CD8-positive, alpha-beta T cell (primary cell): ENCODE measurements at regions of chr15 and their contacts with region 1.

Region 1: GRCh38 chr15:52227456-52227855 is 36.3 kb upstream of the GNB5 start:
- DNase-seq: peak; percentile 37 to 88 (median 67)
- ATAC-seq: peak; percentile 100
- H3K4me3 ChIP-seq: no peak overlapping the region
- H3K4me3 Mint-ChIP-seq: no peak overlapping the region
- H3K27ac ChIP-seq: no peak overlapping the region
- H3K27ac Mint-ChIP-seq: no peak overlapping the region
- H3K4me1 ChIP-seq: peaks cover 4% of the 10 kb centered on the region
- H3K4me1 Mint-ChIP-seq: peaks cover 20% of the 10 kb centered on the region
- H3K27me3 ChIP-seq: no peaks in the 10 kb centered on the region
- H3K27me3 Mint-ChIP-seq: no peaks in the 10 kb centered on the region
- CTCF ChIP-seq: peak; percentile 72

Region 2: DNA sequence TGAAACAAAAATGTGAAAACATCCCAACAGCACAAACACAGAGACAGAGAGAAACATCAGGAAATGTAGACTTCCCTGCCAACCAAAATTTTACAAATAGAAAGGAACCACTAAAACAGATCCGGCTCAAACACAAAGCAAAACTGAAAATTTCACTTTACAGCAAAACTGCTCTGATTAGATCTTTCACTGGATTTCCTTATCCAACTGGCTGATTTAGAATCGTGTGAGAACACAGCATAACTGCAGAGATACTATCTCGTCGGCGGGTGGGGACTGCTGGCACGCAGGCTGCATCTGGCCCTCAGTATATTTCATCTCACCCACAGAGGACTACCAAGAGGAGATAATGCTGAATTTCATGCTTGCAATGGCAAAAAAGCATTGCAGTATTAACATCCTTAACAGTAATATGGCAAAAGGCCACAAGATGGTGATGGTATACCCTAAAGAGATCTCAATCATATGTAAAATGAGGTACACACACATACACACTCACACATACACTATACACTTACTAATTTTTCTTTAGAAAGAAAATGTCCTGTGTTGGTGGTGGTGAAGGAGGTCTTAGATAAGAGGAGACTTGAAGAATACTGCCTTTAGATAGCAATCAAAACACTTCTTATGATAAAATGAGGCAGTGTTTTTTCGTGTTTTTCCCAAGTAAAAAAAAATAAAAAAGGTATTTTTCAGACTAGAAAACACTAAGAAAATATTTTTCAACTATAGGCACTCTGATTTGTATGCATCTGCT is 245.3 kb before region 1 on chr15:
- CTCF ChIA-PET with region 1: interaction called, 5 read pairs
- POLR2A ChIA-PET with region 1: no interaction called
- intact Hi-C with region 1: loop called (anchors 1 kb)
- DNase-seq: peak in 7 of 9 experiments; percentile 5 to 81 (median 32)
- ATAC-seq: peak; percentile 96
- H3K4me3 ChIP-seq: no peak overlapping the region
- H3K4me3 Mint-ChIP-seq: peak overlapping the region; percentile 68
- H3K27ac ChIP-seq: no peak overlapping the region
- H3K27ac Mint-ChIP-seq: peak overlapping the region; percentile 25
- H3K4me1 ChIP-seq: peaks cover 8% of the 10 kb centered on the region
- H3K4me1 Mint-ChIP-seq: peaks cover 10% of the 10 kb centered on the region
- H3K27me3 ChIP-seq: peaks cover 0 to 2% of the 10 kb centered on the region in 2 experiments
- H3K27me3 Mint-ChIP-seq: no peaks in the 10 kb centered on the region
- CTCF ChIP-seq: peak; percentile 88

Region 3: GRCh38 chr15:52163321-52164190 is 63.9 kb before region 1 on chr15:
- CTCF ChIA-PET with region 1: interaction called, 35 read pairs
- POLR2A ChIA-PET with region 1: no interaction called
- intact Hi-C with region 1: loop called (anchors 1 to 2 kb)
- DNase-seq: peak in 5 of 9 experiments; percentile 31 to 55 (median 40)
- ATAC-seq: peak; percentile 46
- H3K4me3 ChIP-seq: no peak overlapping the region
- H3K4me3 Mint-ChIP-seq: no peak overlapping the region
- H3K27ac ChIP-seq: no peak overlapping the region
- H3K27ac Mint-ChIP-seq: no peak overlapping the region
- H3K4me1 ChIP-seq: peaks cover 4% of the 10 kb centered on the region
- H3K4me1 Mint-ChIP-seq: peaks cover 35% of the 10 kb centered on the region
- H3K27me3 ChIP-seq: no peaks in the 10 kb centered on the region
- H3K27me3 Mint-ChIP-seq: no peaks in the 10 kb centered on the region
- CTCF ChIP-seq: peak; percentile 31

Region 4: GRCh38 chr15:52217186-52217585 is 10.3 kb before region 1 on chr15:
- CTCF ChIA-PET with region 1: interaction called, 36 read pairs
- POLR2A ChIA-PET with region 1: no interaction called
- intact Hi-C with region 1: no loop called
- DNase-seq: peak in 2 of 9 experiments; percentile 19 to 29
- ATAC-seq: peak; percentile 34
- H3K4me3 ChIP-seq: no peak overlapping the region
- H3K4me3 Mint-ChIP-seq: no peak overlapping the region
- H3K27ac ChIP-seq: no peak overlapping the region
- H3K27ac Mint-ChIP-seq: no peak overlapping the region
- H3K4me1 ChIP-seq: peaks cover 17% of the 10 kb centered on the region
- H3K4me1 Mint-ChIP-seq: peaks cover 17% of the 10 kb centered on the region
- H3K27me3 ChIP-seq: no peaks in the 10 kb centered on the region
- H3K27me3 Mint-ChIP-seq: no peaks in the 10 kb centered on the region
- CTCF ChIP-seq: no peak

Region 5: DNA sequence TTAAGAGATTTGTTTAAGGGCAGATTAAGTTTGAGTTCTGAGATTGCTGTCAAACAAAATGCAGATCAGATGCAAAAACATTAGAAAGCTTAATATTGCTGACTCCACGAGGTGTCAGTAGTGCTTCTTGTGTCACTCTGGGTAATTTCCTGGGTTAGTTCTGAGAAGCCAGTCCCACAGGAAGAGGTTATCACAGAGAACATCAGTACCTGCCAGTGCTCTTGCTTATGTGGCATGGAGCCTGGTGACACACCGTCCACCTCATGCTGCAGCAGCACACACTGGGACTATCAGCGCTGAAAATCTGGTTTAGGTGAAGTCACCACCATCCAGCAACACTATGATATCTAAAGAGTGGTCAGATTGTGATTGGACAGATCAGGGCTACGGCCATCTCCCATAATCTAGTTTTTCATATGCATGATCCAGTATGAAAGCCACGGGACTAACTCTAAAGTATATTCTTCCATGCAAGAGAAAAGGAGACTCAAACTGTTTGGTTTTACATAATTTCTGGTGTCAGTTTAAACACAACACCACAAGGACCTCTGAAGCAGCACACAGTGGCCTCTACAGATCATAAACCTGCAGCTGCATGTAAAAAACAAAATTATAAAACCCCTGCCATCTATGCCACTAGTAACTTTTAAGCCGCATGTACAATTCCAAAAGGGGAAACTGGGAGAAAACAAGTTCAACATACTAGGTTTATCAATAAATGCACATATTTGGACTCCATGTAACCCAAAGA is 104.2 kb after region 1 on chr15:
- CTCF ChIA-PET with region 1: no interaction called
- POLR2A ChIA-PET with region 1: no interaction called
- intact Hi-C with region 1: no loop called
- DNase-seq: peak in 8 of 9 experiments; percentile 25 to 84 (median 44)
- ATAC-seq: peak; percentile 99
- H3K4me3 ChIP-seq: no peak overlapping the region
- H3K4me3 Mint-ChIP-seq: no peak overlapping the region
- H3K27ac ChIP-seq: peak overlapping the region in 1 of 2 experiments; percentile 14
- H3K27ac Mint-ChIP-seq: peak overlapping the region; percentile 45
- H3K4me1 ChIP-seq: peaks cover 10% of the 10 kb centered on the region
- H3K4me1 Mint-ChIP-seq: peaks cover 12% of the 10 kb centered on the region
- H3K27me3 ChIP-seq: no peaks in the 10 kb centered on the region
- H3K27me3 Mint-ChIP-seq: no peaks in the 10 kb centered on the region
- CTCF ChIP-seq: peak; percentile 63